Heart right ventricle (tissue), 16 donors: ENCODE measurements at regions of chr20 and their contacts with region 1.

Region 1: GRCh38 chr20:59269411-59270025 is 30.9 kb upstream of the EDN3 start:
- DNase-seq: no peak
- ATAC-seq: no peak
- H3K4me3 ChIP-seq: no peak overlapping the region
- H3K27ac ChIP-seq: no peak overlapping the region
- H3K4me1 ChIP-seq: no peaks in the 10 kb centered on the region
- H3K27me3 ChIP-seq: peaks cover 0 to 96% (median 52%) of the 10 kb centered on the region in 7 donors
- CTCF ChIP-seq: no peak

Region 2: GRCh38 chr20:58471193-58472164 is 798.0 kb before region 1 on chr20:
- intact Hi-C with region 1: no loop called
- DNase-seq: peak; percentile 64 to 76
- ATAC-seq: peak; percentile 83 to 94 (median 90)
- H3K4me3 ChIP-seq: no peak overlapping the region
- H3K27ac ChIP-seq: peak overlapping the region in 1 of 10 donors; percentile 15
- H3K4me1 ChIP-seq: peaks cover 0 to 17% (median 6%) of the 10 kb centered on the region in 9 donors
- H3K27me3 ChIP-seq: peaks cover 0 to 5% (median 3%) of the 10 kb centered on the region in 7 donors
- CTCF ChIP-seq: no peak

Region 3: GRCh38 chr20:58880994-58881752 is 388.3 kb before region 1 on chr20:
- intact Hi-C with region 1: no loop called
- DNase-seq: no peak
- ATAC-seq: peak in 1 of 8 donors; percentile 20
- H3K4me3 ChIP-seq: no peak overlapping the region
- H3K27ac ChIP-seq: no peak overlapping the region
- H3K4me1 ChIP-seq: no peaks in the 10 kb centered on the region
- H3K27me3 ChIP-seq: no peaks in the 10 kb centered on the region
- CTCF ChIP-seq: peak in 1 of 9 donors; percentile 14

Region 4: GRCh38 chr20:59322899-59323454 is 53.5 kb after region 1 on chr20:
- intact Hi-C with region 1: loop called in 1 of 10 experiments (anchors 5 kb)
- DNase-seq: no peak
- ATAC-seq: no peak
- H3K4me3 ChIP-seq: no peak overlapping the region
- H3K27ac ChIP-seq: no peak overlapping the region
- H3K4me1 ChIP-seq: no peaks in the 10 kb centered on the region
- H3K27me3 ChIP-seq: peaks cover 0 to 34% (median 14%) of the 10 kb centered on the region in 7 donors
- CTCF ChIP-seq: no peak